Cardiac septum (tissue), 1 donor: ENCODE measurements at regions of chr2 and their contacts with region 1.

Region 1: GRCh38 chr2:85538486-85539360 is at the start of gene MAT2A:
- DNase-seq: peak; percentile 96
- total RNA-seq, gene MAT2A: 146 TPM

Region 2: DNA sequence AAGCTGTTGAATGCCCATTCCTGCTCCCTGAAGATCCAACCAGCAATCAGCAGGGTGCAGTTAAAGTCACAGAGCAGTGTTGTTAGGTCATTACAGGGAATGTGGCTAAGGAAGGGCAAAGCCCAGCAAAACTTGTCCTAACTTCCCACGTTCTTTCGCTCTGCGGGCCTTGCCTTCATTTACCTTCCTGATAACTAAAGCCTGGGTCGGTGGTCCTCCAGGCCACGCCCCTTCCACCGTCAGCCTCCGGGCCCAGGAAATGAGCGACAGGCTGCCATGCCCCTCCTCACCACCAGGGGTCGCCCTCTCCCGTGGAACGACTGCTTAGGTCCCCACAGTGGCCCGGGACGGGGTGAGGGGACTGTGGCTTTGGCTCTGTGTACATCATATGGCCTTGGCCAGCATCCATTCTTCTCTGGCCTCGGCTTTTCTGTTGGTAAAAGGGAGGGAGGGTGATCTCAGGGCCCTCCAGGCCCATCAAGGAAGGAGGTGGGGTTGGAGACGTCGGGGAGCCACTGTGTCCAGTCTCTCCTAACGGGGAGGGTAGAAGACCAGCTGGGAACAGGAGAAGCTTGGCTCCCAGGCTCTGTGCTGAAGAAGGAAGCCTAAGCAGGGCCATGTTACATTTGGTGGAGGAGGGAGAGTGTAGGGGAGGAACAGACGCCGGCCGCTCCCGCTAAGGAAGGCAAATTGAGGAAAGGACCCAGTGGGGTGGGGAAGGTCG is 118.0 kb before region 1 on chr2:
- intact Hi-C with region 1: loop called (anchors 5 kb)
- DNase-seq: peak; percentile 95

Region 3: DNA sequence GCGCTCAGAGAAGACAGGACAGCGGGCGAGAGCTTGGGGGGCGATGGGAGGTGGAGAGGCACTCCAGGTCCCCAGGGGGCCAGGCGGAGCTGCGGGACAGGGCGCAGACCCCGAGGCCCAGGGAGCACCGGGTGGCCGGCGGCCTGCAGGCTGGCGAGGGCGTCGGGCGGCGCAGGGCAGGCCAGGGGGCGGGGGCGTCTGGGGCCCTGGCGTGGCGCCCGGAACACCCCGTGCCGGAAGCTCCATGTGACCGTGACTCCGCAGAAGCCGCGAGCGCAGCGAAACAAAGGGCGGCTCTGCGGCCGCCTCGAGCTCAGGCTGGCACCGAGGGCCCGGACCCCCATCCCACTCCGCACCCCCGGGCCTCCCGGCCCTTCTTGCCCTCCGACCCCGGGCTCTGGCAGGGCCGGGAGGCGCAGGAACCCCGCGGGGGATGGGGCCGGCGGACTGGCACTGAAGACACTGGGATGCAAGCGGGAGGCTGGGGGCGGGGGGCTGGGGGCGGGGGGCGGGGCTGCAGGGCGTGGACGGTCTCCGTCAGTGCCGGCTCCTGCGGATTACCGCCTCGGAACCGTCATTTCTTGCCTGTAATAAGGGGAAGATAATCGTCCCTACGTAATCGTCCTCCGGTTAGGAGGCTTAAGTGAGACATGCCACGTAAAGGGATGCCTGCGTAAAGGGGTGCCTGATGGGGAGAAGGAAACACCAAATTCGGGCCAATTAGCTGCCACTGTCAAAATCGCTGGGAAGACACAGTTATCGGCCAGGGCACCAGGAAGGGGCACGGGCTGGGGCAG is 101.0 kb before region 1 on chr2:
- intact Hi-C with region 1: loop called (anchors 2 kb)
- DNase-seq: peak; percentile 94

Region 4: DNA sequence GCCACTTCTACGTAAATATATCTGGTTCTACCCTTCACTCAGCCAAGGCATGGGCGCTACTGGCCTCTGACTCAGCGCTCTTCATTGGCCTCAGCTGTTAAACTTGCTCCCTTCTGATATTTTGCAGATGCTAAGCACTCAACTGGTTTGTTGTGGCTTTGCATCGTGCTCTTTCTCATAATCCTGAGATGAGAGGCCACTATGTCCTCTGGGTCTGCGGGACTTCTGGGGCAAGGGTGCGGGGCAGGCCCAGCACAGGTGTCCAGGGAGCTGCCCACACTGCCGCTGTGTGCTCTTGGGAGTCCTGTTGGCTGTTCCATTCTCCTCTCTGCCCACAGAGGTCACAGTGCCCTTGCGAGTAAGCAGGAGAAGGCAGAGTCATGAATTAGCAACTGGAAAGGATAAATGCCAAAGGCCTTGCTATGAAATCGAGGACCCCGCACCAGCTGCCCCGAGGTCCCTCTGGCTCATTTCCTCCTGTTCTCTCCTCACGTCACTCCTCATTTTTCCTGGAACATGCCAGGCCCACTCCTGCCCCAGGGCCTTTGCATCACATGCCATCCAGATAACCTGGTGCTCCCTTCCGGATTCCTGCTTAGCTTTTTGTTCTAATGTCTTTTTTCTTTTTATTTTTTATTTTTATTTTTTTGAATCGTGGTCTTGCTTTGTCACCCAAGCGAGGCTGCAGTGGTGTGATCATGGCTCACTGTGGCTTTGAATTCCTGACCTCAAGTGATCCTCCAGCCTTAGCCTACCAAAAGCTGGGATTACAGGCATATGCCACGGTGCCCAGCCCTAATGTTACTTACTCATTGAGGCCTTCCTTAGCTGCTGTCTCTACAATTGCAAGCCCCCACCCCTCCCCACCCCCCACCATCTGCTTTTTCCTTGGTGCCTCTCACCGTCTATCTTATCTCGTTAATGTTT is 34.6 kb before region 1 on chr2:
- intact Hi-C with region 1: loop called (anchors 1 kb)
- DNase-seq: no peak

Region 5: DNA sequence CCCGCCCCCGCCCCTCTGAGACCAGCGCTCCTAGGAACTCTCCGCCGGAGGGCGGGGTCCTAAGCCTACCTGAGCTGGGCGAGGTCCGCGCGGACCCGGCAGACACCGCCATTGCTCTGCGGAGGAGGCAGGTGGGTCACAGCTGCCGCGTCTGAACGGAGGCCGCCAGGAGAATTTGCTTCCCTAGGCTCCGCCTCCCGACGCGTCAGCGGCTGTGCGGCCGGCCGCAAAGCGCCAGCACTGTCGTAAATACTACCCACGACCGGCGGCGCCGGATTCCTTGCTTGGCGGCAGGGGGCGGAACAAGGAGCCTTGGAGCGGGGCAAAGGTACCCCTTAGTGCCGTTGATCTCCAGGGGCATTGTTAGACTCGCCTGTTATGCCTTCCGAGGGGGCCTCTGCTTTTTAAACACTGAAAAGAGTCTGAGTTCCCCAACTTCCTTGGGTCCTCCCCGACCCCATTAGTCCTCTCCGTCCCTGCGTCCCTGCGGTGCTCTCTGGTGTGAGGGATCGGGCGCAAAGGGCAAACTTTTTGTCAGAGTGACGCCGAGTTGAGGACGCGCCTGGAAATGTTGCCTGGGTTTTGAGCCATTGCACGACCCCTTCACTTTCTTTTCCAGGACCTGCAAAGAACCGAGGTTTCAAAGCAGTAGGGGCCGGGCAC is 22.7 kb after region 1 on chr2 and contains the start of gene GGCX:
- intact Hi-C with region 1: loop called (anchors 1 kb)
- DNase-seq: peak; percentile 98
- total RNA-seq, gene GGCX: 23.3 TPM